ENCODE measurements at regions of chr14 and their contacts with region 1.

Region 1: DNA sequence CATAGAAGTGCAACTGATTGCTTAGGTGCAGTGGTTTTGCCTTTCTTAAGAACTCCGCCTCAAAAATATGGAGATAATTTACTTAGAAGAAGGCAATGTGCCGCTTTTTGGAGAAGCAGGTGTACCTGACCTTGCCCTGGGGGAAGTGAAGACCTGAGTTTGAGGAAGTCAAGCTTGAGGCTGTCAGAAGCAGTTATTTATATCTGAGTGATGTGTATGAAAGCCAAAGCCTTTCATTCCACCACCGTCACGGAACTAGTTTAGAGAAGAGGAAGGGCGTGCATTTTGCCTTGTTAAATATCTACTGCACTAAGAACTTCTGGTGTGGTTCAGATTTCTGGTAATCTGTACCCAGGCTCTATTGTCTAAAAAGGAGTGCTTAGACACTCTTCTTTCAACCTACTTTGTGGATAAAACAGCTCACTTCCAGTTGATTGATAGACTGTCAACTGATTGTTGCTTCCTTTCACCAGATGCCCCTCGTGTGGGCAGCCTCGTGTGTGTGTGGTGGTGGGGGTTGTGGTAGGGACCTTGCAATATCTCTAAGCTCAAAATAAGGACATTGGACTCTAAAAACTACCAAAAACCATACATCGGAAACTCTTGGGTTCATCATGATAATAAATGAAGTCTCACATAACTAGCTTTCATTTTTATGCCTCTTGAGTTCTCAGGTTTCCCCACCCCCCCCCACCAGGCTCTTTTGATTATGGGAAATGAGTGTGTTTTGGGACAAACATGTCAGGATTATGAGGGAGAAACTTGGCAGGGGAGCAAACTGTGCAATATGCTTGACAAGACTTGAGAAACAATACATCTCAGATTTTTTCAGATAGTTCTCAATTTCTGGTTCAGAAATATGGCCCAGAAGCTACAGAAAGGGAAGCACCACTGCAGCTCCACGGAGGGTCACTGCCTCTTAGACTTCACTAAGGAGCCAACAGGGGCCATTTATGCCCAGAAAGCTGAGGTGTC is 78.6 kb downstream of the ARF6 start:
- DNase-seq: peak; percentile 69
- H3K4me3 Mint-ChIP-seq: peak overlapping the region; percentile 73
- H3K27ac Mint-ChIP-seq: peak overlapping the region; percentile 97
- H3K4me1 Mint-ChIP-seq: peaks cover 59% of the 10 kb centered on the region
- H3K27me3 Mint-ChIP-seq: no peaks in the 10 kb centered on the region

Region 2: DNA sequence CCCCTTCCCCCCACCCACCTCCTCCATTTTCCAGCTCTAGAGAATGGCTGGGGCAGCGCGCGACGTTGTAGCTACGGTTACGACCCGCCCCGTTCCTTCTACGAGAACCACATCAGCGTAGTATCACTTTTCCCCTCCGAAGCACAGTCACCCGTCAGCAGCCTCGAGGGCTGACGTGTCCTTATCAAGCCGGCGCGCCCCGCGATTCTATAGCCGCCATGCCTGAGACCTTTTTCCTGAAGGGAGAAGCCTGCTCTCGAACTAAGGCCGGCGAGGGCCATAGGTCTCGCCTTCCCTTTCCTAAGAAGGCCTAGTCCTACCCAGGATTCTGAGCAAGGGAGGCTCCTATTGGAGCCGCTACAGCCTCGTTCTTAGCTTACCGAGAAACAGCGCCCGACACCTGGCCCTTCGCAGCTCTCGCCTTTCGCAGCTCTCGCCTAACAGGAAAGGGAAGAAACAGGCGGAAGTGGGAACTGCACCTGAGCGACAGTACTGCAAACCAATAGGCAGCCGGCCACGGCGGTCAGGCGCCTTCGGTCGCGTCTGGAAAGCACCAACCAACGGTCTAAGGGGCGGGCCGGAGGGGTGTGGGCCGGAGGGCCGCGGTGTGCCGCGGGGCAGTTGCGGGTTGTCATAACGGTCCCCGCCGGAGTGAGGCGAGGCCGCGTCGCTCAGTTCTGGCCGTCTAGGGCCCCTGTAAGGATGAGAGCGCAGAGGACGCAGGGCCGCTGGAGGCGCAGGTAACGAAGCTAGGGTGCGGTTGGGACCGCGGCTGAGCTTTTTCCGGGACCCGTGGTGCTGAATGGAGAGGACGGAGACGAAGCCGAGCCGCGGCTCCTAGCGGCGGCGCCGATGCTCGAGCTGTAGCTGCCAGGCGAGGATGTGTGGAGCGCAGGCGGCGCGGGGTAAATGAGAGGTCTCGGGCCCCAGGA is 351.0 kb before region 1 on chr14 and contains the starts of genes MGAT2 and RPL36AL:
- CTCF ChIA-PET with region 1: no interaction called
- intact Hi-C with region 1: loop called (anchors 5 kb)
- DNase-seq: peak; percentile 97
- H3K4me3 Mint-ChIP-seq: peak within 1 kb of the TSS; percentile 97
- H3K27ac Mint-ChIP-seq: peak within 1 kb of the TSS; percentile 97
- H3K4me1 Mint-ChIP-seq: peaks cover 52% of the 10 kb centered on the region
- H3K27me3 Mint-ChIP-seq: no peaks in the 10 kb centered on the region
- total RNA-seq, gene MGAT2: 20.6 to 20.7 TPM
- total RNA-seq, gene RPL36AL: 250 to 266 TPM

Region 3: GRCh38 chr14:49879683-49880204 is 91.7 kb before region 1 on chr14:
- CTCF ChIA-PET with region 1: no interaction called
- intact Hi-C with region 1: no loop called
- DNase-seq: peak; percentile 79
- H3K4me3 Mint-ChIP-seq: no peak overlapping the region
- H3K27ac Mint-ChIP-seq: peak overlapping the region; percentile 30
- H3K4me1 Mint-ChIP-seq: peaks cover 17% of the 10 kb centered on the region
- H3K27me3 Mint-ChIP-seq: no peaks in the 10 kb centered on the region

Region 4: GRCh38 chr14:49908432-49908781 is 63.0 kb before region 1 on chr14:
- CTCF ChIA-PET with region 1: interaction called, 3 read pairs
- intact Hi-C with region 1: loop called (anchors 2 kb)
- DNase-seq: no peak
- H3K4me3 Mint-ChIP-seq: no peak overlapping the region
- H3K27ac Mint-ChIP-seq: no peak overlapping the region
- H3K4me1 Mint-ChIP-seq: peaks cover 40% of the 10 kb centered on the region
- H3K27me3 Mint-ChIP-seq: no peaks in the 10 kb centered on the region

Region 5: GRCh38 chr14:49946320-49947141 is 24.9 kb before region 1 on chr14:
- CTCF ChIA-PET with region 1: interaction called, 4 read pairs
- intact Hi-C with region 1: loop called (anchors 1 kb)
- DNase-seq: peak; percentile 51
- H3K4me3 Mint-ChIP-seq: peak overlapping the region; percentile 44
- H3K27ac Mint-ChIP-seq: peak overlapping the region; percentile 62
- H3K4me1 Mint-ChIP-seq: peaks cover 64% of the 10 kb centered on the region
- H3K27me3 Mint-ChIP-seq: no peaks in the 10 kb centered on the region

Region 6: DNA sequence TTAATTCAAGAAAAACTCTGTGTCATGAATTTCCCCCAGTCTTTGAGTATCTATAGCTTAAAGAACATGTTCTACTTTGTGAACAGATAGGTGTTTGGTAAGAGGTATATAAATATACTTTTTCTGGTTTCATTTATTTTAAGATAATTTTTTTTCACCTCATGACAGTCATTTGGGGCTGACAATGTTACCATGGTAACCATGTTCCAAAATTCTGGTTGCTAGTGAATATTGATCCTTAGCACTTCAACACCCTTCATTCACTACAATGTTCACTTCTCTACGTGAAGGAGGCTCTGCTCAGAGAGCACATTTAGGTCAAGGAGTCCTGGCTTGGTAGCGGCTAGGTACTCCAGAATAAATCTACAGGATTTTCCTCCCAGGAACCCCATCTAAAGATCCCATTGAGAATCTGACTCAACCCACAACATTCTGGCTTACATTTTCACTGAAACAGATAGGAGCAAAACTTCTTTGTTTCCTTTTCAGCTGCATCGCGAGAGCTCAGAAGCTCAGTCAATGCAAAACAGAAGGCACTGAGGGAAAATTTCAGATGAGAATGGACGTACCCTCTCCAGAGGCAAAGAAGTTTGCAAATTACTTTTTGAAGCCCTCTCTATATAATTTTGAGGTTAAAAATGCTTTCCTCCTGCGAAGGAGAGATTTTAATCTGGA is 15.0 kb after region 1 on chr14:
- CTCF ChIA-PET with region 1: interaction called, 4 read pairs
- intact Hi-C with region 1: loop called (anchors 1 kb)
- DNase-seq: no peak
- H3K4me3 Mint-ChIP-seq: no peak overlapping the region
- H3K27ac Mint-ChIP-seq: peak overlapping the region; percentile 34
- H3K4me1 Mint-ChIP-seq: peaks cover 40% of the 10 kb centered on the region
- H3K27me3 Mint-ChIP-seq: no peaks in the 10 kb centered on the region

Region 7: DNA sequence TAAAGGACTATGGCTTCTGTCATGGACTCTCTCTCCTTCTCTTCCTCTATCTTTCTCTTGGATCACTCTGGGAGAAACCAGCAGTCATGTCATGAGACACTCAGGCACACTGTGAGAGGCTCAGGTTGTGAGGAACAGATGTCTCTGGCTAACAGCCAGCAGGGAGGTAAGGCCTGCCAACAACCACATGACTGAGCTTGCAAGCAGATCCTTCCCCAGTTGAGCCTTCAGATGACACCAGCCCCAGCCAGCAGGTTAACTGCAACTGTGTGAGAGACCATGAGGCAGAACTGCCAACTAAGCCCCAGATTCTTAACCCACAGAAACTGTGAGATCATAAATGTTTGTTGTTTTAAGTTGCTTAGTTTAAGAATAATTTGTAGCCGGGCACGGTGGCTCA is 54.3 kb after region 1 on chr14:
- CTCF ChIA-PET with region 1: no interaction called
- intact Hi-C with region 1: loop called (anchors 1 kb)
- DNase-seq: peak; percentile 41
- H3K4me3 Mint-ChIP-seq: no peak overlapping the region
- H3K27ac Mint-ChIP-seq: no peak overlapping the region
- H3K4me1 Mint-ChIP-seq: peaks cover 27% of the 10 kb centered on the region
- H3K27me3 Mint-ChIP-seq: no peaks in the 10 kb centered on the region

Measured in activated naive CD4-positive, alpha-beta T cell treated with anti-CD3 and anti-CD28 coated beads for 36 hours (primary cell).